Right lobe of liver (tissue), 6 donors: ENCODE measurements at regions of chr2 and their contacts with region 1.

Region 1: DNA sequence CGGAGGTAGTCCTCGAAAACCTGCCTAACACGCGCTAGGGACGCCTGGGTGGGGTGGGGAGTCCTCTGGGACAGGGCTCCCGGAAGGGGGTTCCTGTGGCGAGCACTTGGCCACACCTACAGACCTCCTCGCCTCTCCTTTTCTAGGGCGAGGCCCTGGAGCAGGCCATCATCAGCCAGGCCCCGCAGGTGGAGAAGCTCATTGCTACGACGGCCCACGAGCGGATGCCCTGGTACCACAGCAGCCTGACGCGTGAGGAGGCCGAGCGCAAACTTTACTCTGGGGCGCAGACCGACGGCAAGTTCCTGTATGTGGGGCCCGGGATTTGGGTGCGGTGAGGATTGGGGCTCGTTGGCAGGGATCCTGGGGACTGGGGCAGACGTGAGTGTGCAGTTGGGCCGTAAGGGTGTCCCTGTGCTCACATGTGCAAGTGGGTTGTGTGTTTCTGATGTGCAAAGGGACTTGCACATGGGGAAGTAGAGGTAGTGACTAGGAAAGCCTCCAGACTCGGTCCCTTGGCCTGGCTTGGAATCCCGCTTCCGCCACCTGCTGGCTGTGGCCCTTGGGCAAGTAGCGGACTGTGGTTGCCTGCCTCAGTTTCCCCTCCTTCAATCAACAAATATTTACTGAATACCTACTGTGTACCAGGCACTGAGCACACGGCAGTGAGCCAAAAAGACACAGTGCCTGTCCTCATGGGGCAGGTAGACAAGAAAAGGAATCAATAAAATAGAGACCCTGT is 11.7 kb downstream of the ZAP70 start:
- DNase-seq: peak in 1 of 3 donors; percentile 43
- ATAC-seq: no peak
- H3K4me3 ChIP-seq: no peak overlapping the region
- H3K27ac ChIP-seq: no peak overlapping the region
- H3K4me1 ChIP-seq: no peaks in the 10 kb centered on the region
- H3K27me3 ChIP-seq: no peaks in the 10 kb centered on the region
- CTCF ChIP-seq: no peak
- POLR2A ChIP-seq: no peak

Region 2: DNA sequence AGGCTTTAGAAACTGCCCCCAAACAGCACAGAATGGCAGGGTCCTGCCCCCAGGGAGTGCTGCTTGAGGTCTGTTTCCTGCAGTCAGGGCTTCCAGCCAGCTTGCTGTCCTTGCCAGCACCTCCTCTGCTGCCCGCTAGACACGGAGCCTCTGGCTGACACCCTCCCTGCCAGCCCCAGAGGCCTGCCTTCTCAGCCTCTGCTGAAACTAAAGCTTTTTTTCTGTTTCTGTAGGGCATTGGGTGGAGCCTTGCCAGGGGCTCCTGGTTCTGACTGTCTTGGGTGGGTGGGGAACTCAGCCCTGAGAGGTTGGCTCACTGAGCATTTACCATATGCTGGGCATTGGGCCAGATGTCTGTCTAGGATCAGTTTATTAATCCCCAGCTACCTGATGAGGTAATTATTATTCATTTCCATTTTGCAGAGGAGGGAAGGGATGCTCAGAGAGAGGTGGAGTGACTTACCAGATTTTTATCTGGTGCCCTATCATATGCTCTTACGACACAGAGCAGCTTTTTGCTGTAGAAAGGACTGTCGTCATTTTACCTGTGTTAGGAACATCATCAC is 754.9 kb after region 1 on chr2:
- intact Hi-C with region 1: loop called in 1 of 2 experiments (anchors 5 kb)
- DNase-seq: peak; percentile 69 to 81 (median 72)
- ATAC-seq: peak; percentile 76 to 87 (median 82)
- H3K4me3 ChIP-seq: no peak overlapping the region
- H3K27ac ChIP-seq: no peak overlapping the region
- H3K4me1 ChIP-seq: peaks cover 0 to 17% (median under 1%) of the 10 kb centered on the region in 4 donors
- H3K27me3 ChIP-seq: no peaks in the 10 kb centered on the region
- CTCF ChIP-seq: no peak
- POLR2A ChIP-seq: no peak